Esophagus muscularis mucosa (tissue), 4 donors: ENCODE measurements at regions of chr5 and their contacts with region 1.

Region 1: GRCh38 chr5:157328277-157328912 is 62.5 kb downstream of the CYFIP2 start:
- DNase-seq: no peak
- H3K4me3 ChIP-seq: peak overlapping the region; percentile 22 to 30 (median 30)
- H3K27ac ChIP-seq: no peak overlapping the region
- H3K4me1 ChIP-seq: peaks cover 0 to 5% (median 4%) of the 10 kb centered on the region in 4 donors
- H3K27me3 ChIP-seq: no peaks in the 10 kb centered on the region
- CTCF ChIP-seq: peak; percentile 86 to 95 (median 88)
- EP300 ChIP-seq: no peak
- POLR2A ChIP-seq: no peak

Region 2: GRCh38 chr5:156906807-156907206 is 421.6 kb before region 1 on chr5:
- intact Hi-C with region 1: no loop called
- DNase-seq: no peak
- H3K4me3 ChIP-seq: no peak overlapping the region
- H3K27ac ChIP-seq: no peak overlapping the region
- H3K4me1 ChIP-seq: no peaks in the 10 kb centered on the region
- H3K27me3 ChIP-seq: no peaks in the 10 kb centered on the region
- CTCF ChIP-seq: no peak
- EP300 ChIP-seq: no peak
- POLR2A ChIP-seq: no peak

Region 3: GRCh38 chr5:157484768-157485167 is 156.4 kb after region 1 on chr5:
- intact Hi-C with region 1: loop called (anchors 5 kb)
- DNase-seq: no peak
- H3K4me3 ChIP-seq: no peak overlapping the region
- H3K27ac ChIP-seq: peak overlapping the region; percentile 2 to 55 (median 30)
- H3K4me1 ChIP-seq: peaks cover 0 to 49% (median 38%) of the 10 kb centered on the region in 4 donors
- H3K27me3 ChIP-seq: no peaks in the 10 kb centered on the region
- CTCF ChIP-seq: no peak
- EP300 ChIP-seq: no peak
- POLR2A ChIP-seq: no peak